KBM-7 (cell line): ENCODE measurements at regions of chr6 and their contacts with region 1.

Region 1: DNA sequence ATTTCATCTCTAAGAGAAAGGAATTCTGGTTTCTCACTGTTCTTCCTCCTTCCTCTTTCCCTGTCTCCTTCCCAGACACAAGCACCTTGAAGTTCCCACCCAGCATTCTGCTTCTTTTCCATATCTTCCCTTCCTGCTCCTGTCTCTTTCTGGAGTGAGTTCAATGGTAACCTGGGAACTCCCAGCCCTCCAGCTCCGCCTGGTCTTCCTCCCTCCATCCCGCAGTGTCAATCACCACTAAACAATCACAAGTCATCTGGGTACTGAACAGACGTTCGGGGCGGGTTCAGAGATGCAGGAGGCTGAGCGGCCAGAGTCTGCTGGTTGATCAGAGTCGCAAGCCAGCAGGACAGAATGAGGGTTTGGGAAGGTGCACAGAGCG is 7.7 kb downstream of the TTBK1 start:
- DNase-seq: no peak

Region 2: DNA sequence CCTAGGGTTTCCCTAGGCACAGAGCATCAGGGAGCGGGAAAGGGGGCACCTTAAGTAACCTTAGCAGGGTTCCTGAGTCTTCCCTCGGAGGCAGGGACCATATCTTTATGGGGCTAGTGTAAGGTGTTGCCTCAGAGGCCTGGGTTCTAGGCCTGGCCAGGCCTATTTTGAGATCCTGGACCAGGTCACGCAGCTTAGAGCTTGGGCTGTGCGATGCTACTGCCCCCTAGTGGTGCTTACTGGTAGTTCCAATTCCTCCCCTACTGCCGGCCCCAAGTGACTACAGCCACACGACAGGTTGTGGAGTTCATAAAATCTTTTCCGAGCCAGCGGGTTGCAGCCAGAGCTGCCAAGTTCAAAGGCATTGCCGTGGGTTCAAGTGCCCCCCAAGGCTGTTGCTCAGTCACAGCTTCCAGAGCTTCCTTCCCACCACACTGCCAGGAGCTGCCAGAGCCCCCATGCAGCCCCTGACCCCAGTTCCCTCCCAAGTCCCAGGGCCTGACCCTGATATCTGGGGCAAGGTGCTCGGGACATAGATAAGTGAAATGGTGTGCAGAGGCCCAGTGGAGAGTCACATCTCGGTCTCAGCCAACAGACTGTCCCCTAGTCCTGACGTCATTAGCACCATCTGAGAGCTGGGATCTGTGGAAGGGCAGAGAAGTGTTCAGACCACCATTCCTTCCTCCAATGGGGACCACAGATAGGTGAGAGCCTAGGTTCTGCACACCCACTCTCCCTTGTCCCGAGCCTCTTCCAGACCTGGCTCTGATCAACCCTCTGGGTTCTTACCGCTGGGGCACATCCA is 255.9 kb after region 1 on chr6:
- in situ Hi-C with region 1: loop called (anchors 10 kb)
- DNase-seq: peak; percentile 93

Region 3: GRCh38 chr6:44387346-44388133 is 1136.6 kb after region 1 on chr6 and contains the start of gene CDC5L:
- in situ Hi-C with region 1: no loop called
- DNase-seq: peak; percentile 99